ENCODE measurements at regions of chr6 and their contacts with region 1.

Region 1: GRCh38 chr6:41318654-41319565 is 16.5 kb upstream of the NCR2 start:
- DNase-seq: peak; percentile 70 to 90 (median 83)
- ATAC-seq: peak; percentile 100
- H3K4me3 ChIP-seq: peak overlapping the region in 1 of 2 experiments; percentile 38
- H3K4me3 Mint-ChIP-seq: peak overlapping the region; percentile 63
- H3K27ac ChIP-seq: no peak overlapping the region
- H3K27ac Mint-ChIP-seq: peak overlapping the region; percentile 71
- H3K4me1 ChIP-seq: peaks cover 13% of the 10 kb centered on the region
- H3K4me1 Mint-ChIP-seq: peaks cover 19% of the 10 kb centered on the region
- H3K27me3 ChIP-seq: no peaks in the 10 kb centered on the region
- H3K27me3 Mint-ChIP-seq: peaks cover 4% of the 10 kb centered on the region
- CTCF ChIP-seq: peak; percentile 99

Region 2: GRCh38 chr6:41092421-41093140 is 226.3 kb before region 1 on chr6:
- CTCF ChIA-PET with region 1: interaction called, 8 read pairs
- POLR2A ChIA-PET with region 1: no interaction called
- intact Hi-C with region 1: loop called in 1 of 2 experiments (anchors 5 kb)
- DNase-seq: peak in 1 of 9 experiments; percentile 34
- ATAC-seq: no peak
- H3K4me3 ChIP-seq: no peak overlapping the region
- H3K4me3 Mint-ChIP-seq: no peak overlapping the region
- H3K27ac ChIP-seq: no peak overlapping the region
- H3K27ac Mint-ChIP-seq: peak overlapping the region; percentile 18
- H3K4me1 ChIP-seq: no peaks in the 10 kb centered on the region
- H3K4me1 Mint-ChIP-seq: peaks cover 4% of the 10 kb centered on the region
- H3K27me3 ChIP-seq: no peaks in the 10 kb centered on the region
- H3K27me3 Mint-ChIP-seq: no peaks in the 10 kb centered on the region
- CTCF ChIP-seq: no peak

Region 3: GRCh38 chr6:41191569-41191968 is 127.3 kb before region 1 on chr6:
- CTCF ChIA-PET with region 1: interaction called, 26 read pairs
- POLR2A ChIA-PET with region 1: no interaction called
- intact Hi-C with region 1: loop called in 1 of 2 experiments (anchors 5 kb)
- DNase-seq: peak in 4 of 9 experiments; percentile 28 to 58 (median 42)
- ATAC-seq: peak; percentile 48
- H3K4me3 ChIP-seq: no peak overlapping the region
- H3K4me3 Mint-ChIP-seq: no peak overlapping the region
- H3K27ac ChIP-seq: no peak overlapping the region
- H3K27ac Mint-ChIP-seq: no peak overlapping the region
- H3K4me1 ChIP-seq: peaks cover 27% of the 10 kb centered on the region
- H3K4me1 Mint-ChIP-seq: peaks cover 45% of the 10 kb centered on the region
- H3K27me3 ChIP-seq: no peaks in the 10 kb centered on the region
- H3K27me3 Mint-ChIP-seq: no peaks in the 10 kb centered on the region
- CTCF ChIP-seq: no peak

Region 4: GRCh38 chr6:41306187-41306854 is 12.6 kb before region 1 on chr6:
- CTCF ChIA-PET with region 1: interaction called, 76 read pairs
- POLR2A ChIA-PET with region 1: no interaction called
- intact Hi-C with region 1: loop called (anchors 1 kb)
- DNase-seq: peak in 7 of 9 experiments; percentile 19 to 78 (median 34)
- ATAC-seq: no peak
- H3K4me3 ChIP-seq: no peak overlapping the region
- H3K4me3 Mint-ChIP-seq: no peak overlapping the region
- H3K27ac ChIP-seq: no peak overlapping the region
- H3K27ac Mint-ChIP-seq: no peak overlapping the region
- H3K4me1 ChIP-seq: peaks cover 4% of the 10 kb centered on the region
- H3K4me1 Mint-ChIP-seq: peaks cover 13% of the 10 kb centered on the region
- H3K27me3 ChIP-seq: no peaks in the 10 kb centered on the region
- H3K27me3 Mint-ChIP-seq: no peaks in the 10 kb centered on the region
- CTCF ChIP-seq: peak; percentile 79

Region 5: GRCh38 chr6:41344876-41345275 is 26.0 kb after region 1 on chr6:
- CTCF ChIA-PET with region 1: interaction called, 10 read pairs
- POLR2A ChIA-PET with region 1: no interaction called
- intact Hi-C with region 1: no loop called
- DNase-seq: peak in 8 of 9 experiments; percentile 16 to 85 (median 48)
- ATAC-seq: peak; percentile 99
- H3K4me3 ChIP-seq: no peak overlapping the region
- H3K4me3 Mint-ChIP-seq: peak overlapping the region; percentile 37
- H3K27ac ChIP-seq: peak overlapping the region in 1 of 2 experiments; percentile 59
- H3K27ac Mint-ChIP-seq: peak overlapping the region; percentile 90
- H3K4me1 ChIP-seq: peaks cover 20% of the 10 kb centered on the region
- H3K4me1 Mint-ChIP-seq: peaks cover 28% of the 10 kb centered on the region
- H3K27me3 ChIP-seq: no peaks in the 10 kb centered on the region
- H3K27me3 Mint-ChIP-seq: peaks cover under 1% of the 10 kb centered on the region
- CTCF ChIP-seq: no peak